ENCODE measurements at regions of chr13 and their contacts with region 1.

Region 1: GRCh38 chr13:98672944-98673545 is 79.4 kb downstream of the SLC15A1 start:
- DNase-seq: peak; percentile 73 to 89
- H3K4me3 ChIP-seq: no peak overlapping the region
- H3K27ac ChIP-seq: no peak overlapping the region
- H3K4me1 ChIP-seq: peaks cover 0 to 10% (median 6%) of the 10 kb centered on the region in 4 donors
- H3K27me3 ChIP-seq: no peaks in the 10 kb centered on the region
- CTCF ChIP-seq: peak in 5 of 7 experiments; percentile 84 to 88 (median 85)
- EP300 ChIP-seq: no peak
- POLR2A ChIP-seq: no peak

Region 2: DNA sequence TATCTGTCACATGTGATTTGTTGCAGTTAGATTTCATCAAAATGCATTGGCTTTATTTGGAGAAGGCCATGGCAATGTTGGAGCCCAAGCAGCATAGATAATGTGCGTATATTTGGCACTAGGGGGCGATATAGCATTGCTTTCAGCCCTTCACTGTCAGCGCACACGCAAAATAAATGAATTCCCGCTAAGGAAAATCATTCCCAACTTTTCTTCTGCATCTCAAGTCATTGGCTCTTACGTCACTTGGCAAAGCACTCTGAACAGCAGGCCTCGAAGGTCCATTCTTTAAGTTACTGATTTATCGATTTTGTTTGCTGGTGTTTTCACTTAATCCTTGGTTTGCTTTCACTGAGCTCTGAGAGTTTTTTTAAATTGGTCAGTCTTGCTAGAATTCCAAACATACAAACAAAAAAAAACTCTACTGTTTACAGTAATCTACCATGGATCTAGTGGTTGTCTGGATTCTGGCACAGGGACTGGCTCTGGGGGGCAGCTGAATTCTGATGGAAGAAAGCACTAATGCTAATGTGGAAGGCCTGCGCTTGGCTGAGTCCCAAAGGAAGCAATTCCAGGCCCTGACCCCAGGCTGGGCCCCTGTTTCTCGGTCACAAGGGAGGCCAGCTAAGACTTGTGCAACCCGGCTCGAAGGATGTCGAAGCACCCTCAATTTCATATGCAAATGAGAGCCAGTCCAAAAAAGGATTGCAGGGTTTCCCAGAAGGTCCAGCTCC is 817.3 kb before region 1 on chr13:
- intact Hi-C with region 1: loop called (anchors 10 kb)
- DNase-seq: peak in 1 of 2 donors; percentile 92
- H3K4me3 ChIP-seq: no peak overlapping the region
- H3K27ac ChIP-seq: peak overlapping the region in 3 of 5 donors; percentile 17 to 46 (median 27)
- H3K4me1 ChIP-seq: peaks cover 0 to 11% (median 3%) of the 10 kb centered on the region in 4 donors
- H3K27me3 ChIP-seq: no peaks in the 10 kb centered on the region
- CTCF ChIP-seq: peak in 4 of 7 experiments; percentile 60 to 77 (median 70)
- EP300 ChIP-seq: no peak
- POLR2A ChIP-seq: no peak

Region 3: DNA sequence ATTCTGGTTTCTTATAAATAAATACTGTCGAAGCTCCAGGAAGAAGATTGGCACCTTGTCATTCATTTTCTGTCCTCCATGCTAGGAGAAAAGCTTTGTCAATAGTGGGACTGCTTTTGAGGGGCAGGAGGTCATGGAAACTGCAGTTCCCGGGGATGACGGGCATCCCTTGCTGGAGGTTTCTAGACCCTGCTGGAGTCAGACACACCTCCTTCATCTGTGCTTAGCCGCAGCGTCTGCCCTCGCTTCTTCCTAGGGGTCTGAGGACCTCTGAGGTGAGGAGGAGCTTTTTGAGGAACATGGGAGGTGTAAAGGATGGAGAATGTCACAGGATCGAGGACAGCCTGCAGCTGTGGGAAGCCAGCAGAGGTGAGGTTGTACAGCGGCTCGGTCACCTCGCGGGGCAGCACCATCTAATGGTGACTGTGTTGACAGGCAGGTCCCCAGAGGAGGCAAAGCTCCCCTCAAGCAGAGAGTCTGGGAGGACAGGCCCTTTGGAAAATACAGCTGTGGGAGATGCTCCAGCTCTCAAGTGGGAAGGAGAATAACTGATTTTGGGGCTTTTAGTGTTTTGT is 323.2 kb before region 1 on chr13:
- intact Hi-C with region 1: no loop called
- DNase-seq: peak; percentile 44 to 74
- H3K4me3 ChIP-seq: no peak overlapping the region
- H3K27ac ChIP-seq: no peak overlapping the region
- H3K4me1 ChIP-seq: peaks cover 0 to 5% (median 0%) of the 10 kb centered on the region in 4 donors
- H3K27me3 ChIP-seq: no peaks in the 10 kb centered on the region
- CTCF ChIP-seq: peak in 1 of 7 experiments; percentile 25
- EP300 ChIP-seq: no peak
- POLR2A ChIP-seq: no peak

Region 4: GRCh38 chr13:98377635-98378378 is 295.2 kb before region 1 on chr13:
- intact Hi-C with region 1: no loop called
- DNase-seq: no peak
- H3K4me3 ChIP-seq: no peak overlapping the region
- H3K27ac ChIP-seq: no peak overlapping the region
- H3K4me1 ChIP-seq: no peaks in the 10 kb centered on the region
- H3K27me3 ChIP-seq: no peaks in the 10 kb centered on the region
- CTCF ChIP-seq: no peak
- EP300 ChIP-seq: no peak
- POLR2A ChIP-seq: no peak